PC-3 (cell line): ENCODE measurements at regions of chr3 and their contacts with region 1.

Region 1: DNA sequence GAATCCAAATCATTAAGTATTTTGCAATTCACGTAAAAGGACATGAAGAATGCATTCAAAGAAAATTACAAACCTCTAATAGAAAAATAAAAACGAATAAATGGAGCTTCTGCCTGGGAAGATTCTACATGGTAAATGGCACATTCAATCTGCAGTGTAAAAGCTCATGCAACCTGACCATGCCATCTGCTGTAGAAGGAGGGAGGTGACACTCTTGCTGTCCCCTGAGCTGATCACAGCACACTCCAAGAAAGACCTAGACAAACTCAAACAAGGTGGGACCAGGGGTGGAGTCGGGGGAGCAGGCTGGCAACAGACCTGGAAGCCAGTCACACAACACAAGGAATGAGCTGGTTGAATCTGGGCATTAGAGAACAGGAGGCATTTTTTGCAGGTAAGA is 101.8 kb downstream of the BDH1 start:
- DNase-seq: peak; percentile 48
- ATAC-seq: peak; percentile 92
- H3K4me3 ChIP-seq: no peak overlapping the region
- H3K27ac ChIP-seq: no peak overlapping the region
- H3K4me1 ChIP-seq: no peaks in the 10 kb centered on the region
- H3K27me3 ChIP-seq: no peaks in the 10 kb centered on the region
- CTCF ChIP-seq: peak; percentile 60

Region 2: DNA sequence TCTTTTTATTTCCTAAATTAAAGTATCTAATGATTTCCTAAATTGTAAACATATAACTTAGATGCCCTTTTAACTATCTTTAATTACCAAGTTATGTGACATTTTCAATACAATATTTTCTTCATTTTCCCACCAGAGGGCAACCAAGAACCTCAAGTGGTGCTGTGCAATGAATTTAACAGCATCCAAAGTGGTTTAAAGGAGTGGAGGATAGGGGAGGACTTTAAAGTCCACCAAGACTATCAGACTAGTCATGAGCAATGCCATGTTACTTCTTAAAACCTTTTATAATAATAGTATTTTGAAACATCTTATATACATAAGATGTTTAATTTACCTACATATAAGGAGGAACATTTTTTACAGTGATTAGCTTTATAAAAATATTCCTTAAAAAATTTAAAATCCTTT is 230.0 kb before region 1 on chr3:
- CTCF ChIA-PET with region 1: no interaction called
- POLR2A ChIA-PET with region 1: no interaction called
- intact Hi-C with region 1: loop called (anchors 1 kb)
- DNase-seq: peak; percentile 81
- ATAC-seq: peak; percentile 90
- H3K4me3 ChIP-seq: no peak overlapping the region
- H3K27ac ChIP-seq: no peak overlapping the region
- H3K4me1 ChIP-seq: no peaks in the 10 kb centered on the region
- H3K27me3 ChIP-seq: no peaks in the 10 kb centered on the region
- CTCF ChIP-seq: peak; percentile 83

Region 3: GRCh38 chr3:197256836-197257444 is 197.1 kb before region 1 on chr3:
- CTCF ChIA-PET with region 1: interaction called, 5 read pairs
- POLR2A ChIA-PET with region 1: no interaction called
- intact Hi-C with region 1: loop called (anchors 1 kb)
- DNase-seq: peak; percentile 75
- ATAC-seq: peak; percentile 46; the same call in 1 of the 2 replicates
- H3K4me3 ChIP-seq: no peak overlapping the region
- H3K27ac ChIP-seq: no peak overlapping the region
- H3K4me1 ChIP-seq: no peaks in the 10 kb centered on the region
- H3K27me3 ChIP-seq: no peaks in the 10 kb centered on the region
- CTCF ChIP-seq: peak; percentile 85

Region 4: DNA sequence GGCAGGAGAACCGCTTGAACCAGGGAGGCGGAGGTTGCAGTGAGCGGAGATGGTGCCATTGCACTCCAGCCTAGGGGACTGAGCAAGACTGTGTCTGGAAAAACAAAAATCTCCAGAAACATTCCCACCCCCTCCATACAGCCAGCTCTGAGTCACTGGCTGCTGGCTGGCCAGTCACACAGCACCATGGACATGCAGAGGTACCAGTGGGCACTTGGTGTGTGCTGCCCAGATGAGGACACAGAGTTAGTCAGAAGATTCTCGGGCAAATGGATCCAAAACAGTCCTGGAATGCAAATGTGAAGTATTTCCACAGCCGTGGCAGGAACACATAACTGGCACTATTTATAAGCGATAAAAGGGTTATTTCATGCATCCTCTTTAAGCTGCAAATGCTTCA is 57.1 kb after region 1 on chr3:
- CTCF ChIA-PET with region 1: no interaction called
- POLR2A ChIA-PET with region 1: no interaction called
- intact Hi-C with region 1: loop called (anchors 2 kb)
- DNase-seq: peak; percentile 44
- ATAC-seq: peak; percentile 66
- H3K4me3 ChIP-seq: no peak overlapping the region
- H3K27ac ChIP-seq: no peak overlapping the region
- H3K4me1 ChIP-seq: peaks cover 34% of the 10 kb centered on the region
- H3K27me3 ChIP-seq: no peaks in the 10 kb centered on the region
- CTCF ChIP-seq: no peak

Region 5: DNA sequence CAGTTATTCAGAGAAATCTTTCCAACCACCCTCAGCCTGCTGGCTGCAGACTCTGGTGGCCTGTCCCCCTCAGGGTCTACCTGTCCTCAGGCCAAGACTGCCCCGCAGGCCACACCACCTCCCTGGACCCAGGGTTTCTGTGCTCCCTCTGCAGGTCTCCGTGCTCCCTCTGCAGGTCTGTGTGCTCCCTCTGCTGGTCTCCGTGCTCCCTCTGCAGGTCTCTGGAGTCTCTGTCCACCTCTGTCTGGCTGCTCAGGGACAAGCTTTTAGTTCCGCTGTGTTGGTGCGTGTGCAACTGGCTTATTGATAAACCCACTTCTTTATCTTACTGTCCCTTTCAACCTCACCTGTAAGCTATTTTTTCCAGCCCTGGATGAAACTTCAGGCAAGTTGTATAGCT is 71.7 kb after region 1 on chr3:
- CTCF ChIA-PET with region 1: no interaction called
- POLR2A ChIA-PET with region 1: no interaction called
- intact Hi-C with region 1: no loop called
- DNase-seq: peak; percentile 53
- ATAC-seq: peak; percentile 72
- H3K4me3 ChIP-seq: no peak overlapping the region
- H3K27ac ChIP-seq: no peak overlapping the region
- H3K4me1 ChIP-seq: peaks cover 8% of the 10 kb centered on the region
- H3K27me3 ChIP-seq: no peaks in the 10 kb centered on the region
- CTCF ChIP-seq: peak; percentile 76